CD8-positive, alpha-beta T cell (primary cell): ENCODE measurements at regions of chr2 and their contacts with region 1.

Region 1: DNA sequence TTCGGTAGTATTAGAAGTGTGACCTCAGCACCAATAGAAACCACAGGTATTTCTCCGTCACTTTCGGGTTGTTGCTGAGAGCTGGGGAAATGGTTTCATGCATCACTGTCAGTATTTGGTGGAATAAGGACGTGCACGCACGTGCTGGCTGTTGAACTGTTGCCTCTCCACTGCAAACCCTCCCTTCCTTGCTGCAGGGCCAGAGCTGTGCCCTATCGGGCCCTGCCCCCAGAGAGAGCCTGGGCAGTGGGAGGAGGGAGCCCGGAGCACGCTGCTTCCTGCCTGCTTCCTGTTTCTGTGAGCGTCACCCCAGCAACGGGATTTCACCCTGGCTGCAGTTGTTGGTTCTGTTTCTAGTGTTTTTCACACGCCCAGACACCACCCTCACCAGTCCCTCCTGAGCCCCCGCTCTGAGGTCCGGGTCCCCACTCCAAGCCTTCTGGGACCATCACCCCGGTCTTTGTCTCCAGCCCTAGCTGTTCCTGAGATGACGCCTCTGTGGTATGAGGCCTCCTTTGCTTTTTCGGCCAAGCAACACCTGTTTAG is 47.4 kb downstream of the LRRFIP1 start:
- DNase-seq: peak; percentile 74 to 97 (median 86)
- ATAC-seq: peak; percentile 54
- H3K4me3 ChIP-seq: peak overlapping the region; percentile 37 to 63
- H3K4me3 Mint-ChIP-seq: peak overlapping the region; percentile 88
- H3K27ac ChIP-seq: peak overlapping the region; percentile 94
- H3K27ac Mint-ChIP-seq: peak overlapping the region; percentile 98
- H3K4me1 ChIP-seq: peaks cover 42% of the 10 kb centered on the region
- H3K4me1 Mint-ChIP-seq: peaks cover 52% of the 10 kb centered on the region
- H3K27me3 ChIP-seq: no peaks in the 10 kb centered on the region
- H3K27me3 Mint-ChIP-seq: no peaks in the 10 kb centered on the region
- CTCF ChIP-seq: no peak

Region 2: DNA sequence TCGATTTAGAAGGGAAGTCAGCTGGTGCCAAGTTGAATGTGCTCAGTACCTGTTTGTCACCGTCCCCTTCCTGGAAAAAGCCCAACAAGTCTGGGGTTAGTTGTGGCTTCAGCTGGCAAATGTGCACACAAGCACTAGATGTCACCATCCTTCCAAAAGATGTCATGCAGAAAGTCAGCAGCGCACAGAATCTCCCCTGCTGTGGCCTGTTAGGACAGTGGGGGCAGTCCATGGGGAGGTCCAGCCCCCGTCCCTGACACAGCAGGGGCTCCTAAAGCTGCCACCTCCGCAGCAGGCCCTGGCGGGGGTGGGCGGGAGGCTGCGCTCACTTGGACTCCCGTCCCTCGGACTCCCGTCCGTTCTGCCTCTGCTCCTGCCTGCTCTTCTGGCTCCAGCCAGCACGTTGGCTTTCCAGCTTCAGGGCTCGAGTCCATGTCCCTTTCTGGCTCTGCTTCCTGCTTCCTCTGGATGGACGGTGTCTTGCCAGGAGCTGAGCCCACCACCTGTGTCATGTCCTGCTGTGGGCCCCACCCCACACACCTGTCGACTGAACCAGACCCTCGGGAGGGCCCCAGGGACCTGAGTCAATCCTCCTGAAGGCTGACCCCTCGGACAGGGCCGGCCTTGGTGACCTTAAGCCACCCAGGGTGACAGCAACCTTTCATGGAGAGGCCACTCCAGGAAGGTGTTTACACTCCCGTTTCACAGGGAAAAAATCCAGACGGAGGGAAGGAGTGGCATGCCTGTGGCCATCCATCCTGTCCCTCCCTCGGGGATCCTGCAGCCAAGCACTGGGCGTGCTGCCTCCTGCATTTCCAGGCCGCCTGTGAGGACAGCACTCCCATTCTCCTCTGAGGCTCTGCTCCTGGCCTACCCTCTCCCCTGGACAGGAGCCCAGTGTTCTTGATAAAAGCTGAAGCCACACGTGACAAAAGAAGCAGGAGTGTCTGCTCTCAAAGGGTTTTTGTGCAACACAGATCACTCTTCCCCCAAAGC is 92.8 kb before region 1 on chr2:
- CTCF ChIA-PET with region 1: interaction called, 22 read pairs
- POLR2A ChIA-PET with region 1: no interaction called
- intact Hi-C with region 1: loop called (anchors 1 to 2 kb)
- DNase-seq: peak in 6 of 9 experiments; percentile 13 to 80 (median 54)
- ATAC-seq: peak; percentile 95
- H3K4me3 ChIP-seq: no peak overlapping the region
- H3K4me3 Mint-ChIP-seq: no peak overlapping the region
- H3K27ac ChIP-seq: no peak overlapping the region
- H3K27ac Mint-ChIP-seq: no peak overlapping the region
- H3K4me1 ChIP-seq: no peaks in the 10 kb centered on the region
- H3K4me1 Mint-ChIP-seq: peaks cover 3% of the 10 kb centered on the region
- H3K27me3 ChIP-seq: no peaks in the 10 kb centered on the region
- H3K27me3 Mint-ChIP-seq: no peaks in the 10 kb centered on the region
- CTCF ChIP-seq: peak; percentile 47

Region 3: GRCh38 chr2:237691908-237692600 is 17.2 kb after region 1 on chr2:
- CTCF ChIA-PET with region 1: interaction called, 328 read pairs
- POLR2A ChIA-PET with region 1: interaction called, 119 read pairs
- intact Hi-C with region 1: loop called (anchors 1 kb)
- DNase-seq: peak; percentile 91 to 97 (median 95)
- ATAC-seq: peak; percentile 58
- H3K4me3 ChIP-seq: peak overlapping the region; percentile 80 to 85
- H3K4me3 Mint-ChIP-seq: peak overlapping the region; percentile 81
- H3K27ac ChIP-seq: peak overlapping the region; percentile 81 to 90
- H3K27ac Mint-ChIP-seq: peak overlapping the region; percentile 89
- H3K4me1 ChIP-seq: peaks cover 75% of the 10 kb centered on the region
- H3K4me1 Mint-ChIP-seq: peaks cover 75% of the 10 kb centered on the region
- H3K27me3 ChIP-seq: no peaks in the 10 kb centered on the region
- H3K27me3 Mint-ChIP-seq: no peaks in the 10 kb centered on the region
- CTCF ChIP-seq: no peak

Region 4: GRCh38 chr2:237723602-237724001 is 48.8 kb after region 1 on chr2:
- CTCF ChIA-PET with region 1: interaction called, 16 read pairs
- POLR2A ChIA-PET with region 1: interaction called, 5 read pairs
- intact Hi-C with region 1: no loop called
- DNase-seq: no peak
- ATAC-seq: peak; percentile 59
- H3K4me3 ChIP-seq: no peak overlapping the region
- H3K4me3 Mint-ChIP-seq: no peak overlapping the region
- H3K27ac ChIP-seq: no peak overlapping the region
- H3K27ac Mint-ChIP-seq: no peak overlapping the region
- H3K4me1 ChIP-seq: peaks cover 9% of the 10 kb centered on the region
- H3K4me1 Mint-ChIP-seq: peaks cover 65% of the 10 kb centered on the region
- H3K27me3 ChIP-seq: no peaks in the 10 kb centered on the region
- H3K27me3 Mint-ChIP-seq: no peaks in the 10 kb centered on the region
- CTCF ChIP-seq: no peak

Region 5: GRCh38 chr2:237774802-237775553 is 100.2 kb after region 1 on chr2:
- CTCF ChIA-PET with region 1: interaction called, 12 read pairs
- POLR2A ChIA-PET with region 1: no interaction called
- intact Hi-C with region 1: no loop called
- DNase-seq: peak in 6 of 9 experiments; percentile 14 to 59 (median 46)
- ATAC-seq: peak; percentile 73
- H3K4me3 ChIP-seq: no peak overlapping the region
- H3K4me3 Mint-ChIP-seq: no peak overlapping the region
- H3K27ac ChIP-seq: no peak overlapping the region
- H3K27ac Mint-ChIP-seq: no peak overlapping the region
- H3K4me1 ChIP-seq: no peaks in the 10 kb centered on the region
- H3K4me1 Mint-ChIP-seq: no peaks in the 10 kb centered on the region
- H3K27me3 ChIP-seq: no peaks in the 10 kb centered on the region
- H3K27me3 Mint-ChIP-seq: no peaks in the 10 kb centered on the region
- CTCF ChIP-seq: peak; percentile 43

Region 6: GRCh38 chr2:238263204-238264071 is 588.6 kb after region 1 on chr2:
- CTCF ChIA-PET with region 1: no interaction called
- POLR2A ChIA-PET with region 1: no interaction called
- intact Hi-C with region 1: loop called in 1 of 2 experiments (anchors 1 kb)
- DNase-seq: peak; percentile 57 to 82 (median 77)
- ATAC-seq: peak; percentile 67
- H3K4me3 ChIP-seq: no peak overlapping the region
- H3K4me3 Mint-ChIP-seq: no peak overlapping the region
- H3K27ac ChIP-seq: no peak overlapping the region
- H3K27ac Mint-ChIP-seq: no peak overlapping the region
- H3K4me1 ChIP-seq: no peaks in the 10 kb centered on the region
- H3K4me1 Mint-ChIP-seq: peaks cover 5% of the 10 kb centered on the region
- H3K27me3 ChIP-seq: no peaks in the 10 kb centered on the region
- H3K27me3 Mint-ChIP-seq: no peaks in the 10 kb centered on the region
- CTCF ChIP-seq: peak; percentile 78